ENCODE measurements at regions of chr9 and their contacts with region 1.

Region 1: DNA sequence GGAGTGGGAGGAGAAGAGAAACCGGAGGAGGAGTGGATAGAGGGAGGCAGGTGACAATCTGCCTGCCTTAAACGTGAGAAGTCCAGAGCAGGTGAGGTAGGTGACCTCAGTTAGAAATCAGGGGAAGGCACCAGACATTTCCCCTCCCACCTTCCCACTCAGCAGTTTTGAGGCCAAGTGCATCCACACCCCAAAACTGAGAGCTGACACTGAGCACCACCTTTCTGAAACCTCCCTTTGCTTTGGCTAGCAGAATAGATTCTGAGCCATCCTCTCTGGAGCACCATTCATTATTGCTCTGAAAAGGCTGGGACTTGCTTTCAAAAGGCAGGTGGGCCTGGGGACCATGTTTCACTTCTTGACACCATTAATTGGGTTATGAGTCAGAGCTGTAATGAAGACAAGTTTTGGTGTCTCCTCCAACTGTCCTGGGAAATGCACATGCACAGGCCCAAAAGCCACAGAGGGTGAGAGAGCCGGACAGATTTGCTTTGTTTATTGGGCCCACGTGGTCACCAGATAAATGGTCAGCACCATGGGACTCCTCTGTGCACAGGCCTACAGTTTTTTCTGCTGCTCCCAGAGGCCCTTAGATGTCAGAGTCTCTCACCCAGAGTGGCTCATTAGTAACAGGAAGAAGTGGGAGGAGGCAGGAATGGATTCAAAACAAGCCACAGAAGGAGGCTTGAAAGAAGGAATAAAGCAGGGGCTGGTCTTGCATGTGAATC is 314.7 kb downstream of the TLE1 start:
- DNase-seq: no peak
- ATAC-seq: no peak
- H3K4me3 ChIP-seq: no peak overlapping the region
- H3K27ac ChIP-seq: no peak overlapping the region
- H3K4me1 ChIP-seq: peaks cover 15% of the 10 kb centered on the region
- H3K27me3 ChIP-seq: no peaks in the 10 kb centered on the region
- CTCF ChIP-seq: no peak

Region 2: GRCh38 chr9:80197661-80198060 is 1177.0 kb before region 1 on chr9:
- intact Hi-C with region 1: no loop called
- DNase-seq: no peak
- ATAC-seq: no peak
- H3K4me3 ChIP-seq: no peak overlapping the region
- H3K27ac ChIP-seq: no peak overlapping the region
- H3K4me1 ChIP-seq: no peaks in the 10 kb centered on the region
- H3K27me3 ChIP-seq: no peaks in the 10 kb centered on the region
- CTCF ChIP-seq: no peak

Region 3: GRCh38 chr9:81410197-81410596 is 35.6 kb after region 1 on chr9:
- intact Hi-C with region 1: loop called in 1 of 2 experiments (anchors 5 kb)
- DNase-seq: no peak
- ATAC-seq: no peak
- H3K4me3 ChIP-seq: no peak overlapping the region
- H3K27ac ChIP-seq: no peak overlapping the region
- H3K4me1 ChIP-seq: peaks cover 10% of the 10 kb centered on the region
- H3K27me3 ChIP-seq: no peaks in the 10 kb centered on the region
- CTCF ChIP-seq: no peak

Region 4: DNA sequence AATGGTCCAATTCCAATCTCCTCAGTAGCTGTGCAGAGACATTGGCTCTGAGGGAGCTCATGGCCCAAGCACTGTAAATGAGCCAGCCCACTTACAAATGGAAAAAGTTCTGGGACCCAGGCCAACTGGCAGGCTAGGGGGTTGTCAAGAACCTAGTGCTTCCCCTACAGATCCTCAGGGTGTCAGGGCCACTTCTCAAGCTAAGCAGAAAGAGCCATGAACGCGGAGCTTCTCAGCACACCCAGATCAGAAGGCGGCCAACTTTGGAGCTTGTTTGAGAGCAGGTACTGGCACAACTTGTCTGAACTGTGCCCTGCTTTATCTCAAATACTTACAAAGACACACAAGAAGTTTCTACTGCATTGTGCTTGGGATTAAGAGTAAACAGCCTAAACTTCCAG is 297.3 kb after region 1 on chr9:
- intact Hi-C with region 1: no loop called
- DNase-seq: peak; percentile 79 to 92
- ATAC-seq: peak; percentile 84 to 94 (median 92)
- H3K4me3 ChIP-seq: no peak overlapping the region
- H3K27ac ChIP-seq: peak overlapping the region; percentile 67
- H3K4me1 ChIP-seq: peaks cover 59% of the 10 kb centered on the region
- H3K27me3 ChIP-seq: no peaks in the 10 kb centered on the region
- CTCF ChIP-seq: no peak